BJ (cell line): ENCODE measurements at regions of chr12 and their contacts with region 1.

Region 1: GRCh38 chr12:51874013-51874412 is 13.9 kb upstream of the ANKRD33 start:
- DNase-seq: no peak
- H3K4me3 ChIP-seq: no peak overlapping the region
- H3K27me3 ChIP-seq: no peaks in the 10 kb centered on the region; the same call in 1 of the 2 replicates
- CTCF ChIP-seq: no peak

Region 2: DNA sequence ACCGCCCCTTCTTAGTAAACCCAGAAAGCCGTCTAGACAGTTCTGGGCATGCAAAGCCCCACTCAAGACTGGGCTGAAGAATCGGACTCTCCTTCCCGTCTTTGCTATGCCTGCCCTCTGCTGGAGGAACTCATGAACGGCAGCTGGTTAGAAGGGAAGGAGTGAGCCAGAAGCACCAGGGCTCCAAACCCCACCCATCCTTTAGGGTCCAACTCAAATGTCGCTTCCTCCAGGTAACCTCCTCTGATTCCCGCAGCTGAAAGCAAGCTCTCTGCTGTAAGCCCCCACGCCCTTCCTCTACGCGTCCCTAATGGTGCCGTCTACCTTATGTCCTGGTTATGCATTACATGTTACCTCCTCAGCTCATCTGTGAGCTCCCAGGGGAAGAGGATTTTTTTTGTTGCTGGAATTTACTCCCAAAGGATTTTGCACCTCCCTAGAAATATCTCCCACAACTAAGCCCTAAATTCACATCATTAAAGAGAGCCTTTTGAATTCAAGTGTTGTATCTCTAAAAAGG is 342.0 kb before region 1 on chr12:
- CTCF ChIA-PET with region 1: interaction called, 10 read pairs
- POLR2A ChIA-PET with region 1: no interaction called
- DNase-seq: no peak
- H3K4me3 ChIP-seq: no peak overlapping the region
- H3K27me3 ChIP-seq: no peaks in the 10 kb centered on the region
- CTCF ChIP-seq: peak; percentile 96

Region 3: DNA sequence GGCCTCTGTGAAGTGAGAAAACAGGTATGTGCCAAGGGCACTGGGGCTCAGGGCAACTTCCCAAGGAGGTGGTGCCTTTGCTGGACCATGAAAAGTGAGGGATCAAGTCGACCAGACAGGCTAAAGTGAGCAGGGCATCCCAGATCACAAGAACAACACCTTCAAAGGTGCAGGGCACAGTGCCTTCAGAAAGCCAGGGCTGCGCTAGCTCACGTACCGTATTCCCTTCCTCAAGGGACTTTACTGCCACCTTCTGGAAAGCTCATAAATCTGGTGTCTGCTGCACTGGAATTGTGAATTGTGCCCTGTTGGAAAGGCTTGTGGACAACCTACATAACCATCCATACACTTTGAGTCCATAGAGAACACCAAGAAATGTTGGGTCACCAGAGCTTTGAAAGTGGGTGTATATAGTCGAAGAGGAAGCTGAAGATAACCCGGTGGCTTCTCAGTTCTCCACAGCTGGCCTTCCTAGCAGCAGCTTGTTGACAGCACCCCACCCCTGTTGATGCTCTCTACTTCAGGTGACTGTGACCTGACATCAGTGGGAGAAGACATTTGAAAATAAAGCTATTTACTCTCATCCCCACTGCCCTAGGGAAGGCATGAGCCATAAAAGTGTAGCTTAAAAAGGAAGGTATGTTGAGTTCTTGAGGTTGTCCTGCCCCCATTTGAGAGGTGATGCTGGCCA is 50.0 kb before region 1 on chr12:
- CTCF ChIA-PET with region 1: interaction called, 20 read pairs
- POLR2A ChIA-PET with region 1: no interaction called
- DNase-seq: no peak
- H3K4me3 ChIP-seq: no peak overlapping the region
- H3K27me3 ChIP-seq: no peaks in the 10 kb centered on the region; the same call in 1 of the 2 replicates
- CTCF ChIP-seq: peak; percentile 64

Region 4: GRCh38 chr12:51886021-51886322 is 12.0 kb after region 1 on chr12:
- CTCF ChIA-PET with region 1: interaction called, 24 read pairs
- POLR2A ChIA-PET with region 1: interaction called, 5 read pairs
- DNase-seq: peak; percentile 88
- H3K4me3 ChIP-seq: no peak overlapping the region
- H3K27me3 ChIP-seq: no peaks in the 10 kb centered on the region
- CTCF ChIP-seq: no peak